Colonic mucosa (tissue), 4 donors: ENCODE measurements at regions of chr9 and their contacts with region 1.

Region 1: DNA sequence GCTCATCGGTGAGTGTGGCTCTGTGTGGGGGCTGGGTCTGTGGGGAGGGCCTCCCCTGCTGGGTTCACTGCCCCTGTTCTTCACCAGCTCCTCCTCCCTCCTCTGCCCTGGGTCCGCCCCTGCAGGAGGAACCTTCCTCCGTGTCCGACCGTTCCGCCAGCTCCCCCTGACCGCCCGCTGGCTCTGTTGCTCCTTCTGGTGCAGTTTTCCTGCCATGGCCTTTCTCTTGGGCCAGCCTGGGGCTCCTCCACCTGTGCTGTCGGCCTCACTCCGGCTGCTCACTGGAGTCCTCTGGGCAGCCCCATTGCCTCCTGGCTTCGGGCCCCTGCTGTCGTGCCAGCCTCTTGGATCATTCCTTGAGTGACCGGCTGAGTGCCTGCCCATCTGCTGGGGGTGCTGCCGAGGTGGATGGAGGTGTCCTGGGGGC is 12.3 kb downstream of the RNU6ATAC start:
- DNase-seq: no peak
- H3K4me3 ChIP-seq: no peak overlapping the region
- H3K27ac ChIP-seq: no peak overlapping the region
- H3K4me1 ChIP-seq: no peaks in the 10 kb centered on the region
- H3K27me3 ChIP-seq: no peaks in the 10 kb centered on the region
- CTCF ChIP-seq: no peak

Region 2: GRCh38 chr9:133803028-133803585 is 348.9 kb before region 1 on chr9:
- intact Hi-C with region 1: loop called (anchors 5 kb)
- DNase-seq: no peak
- H3K4me3 ChIP-seq: no peak overlapping the region
- H3K27ac ChIP-seq: no peak overlapping the region
- H3K4me1 ChIP-seq: no peaks in the 10 kb centered on the region
- H3K27me3 ChIP-seq: no peaks in the 10 kb centered on the region
- CTCF ChIP-seq: no peak

Region 3: DNA sequence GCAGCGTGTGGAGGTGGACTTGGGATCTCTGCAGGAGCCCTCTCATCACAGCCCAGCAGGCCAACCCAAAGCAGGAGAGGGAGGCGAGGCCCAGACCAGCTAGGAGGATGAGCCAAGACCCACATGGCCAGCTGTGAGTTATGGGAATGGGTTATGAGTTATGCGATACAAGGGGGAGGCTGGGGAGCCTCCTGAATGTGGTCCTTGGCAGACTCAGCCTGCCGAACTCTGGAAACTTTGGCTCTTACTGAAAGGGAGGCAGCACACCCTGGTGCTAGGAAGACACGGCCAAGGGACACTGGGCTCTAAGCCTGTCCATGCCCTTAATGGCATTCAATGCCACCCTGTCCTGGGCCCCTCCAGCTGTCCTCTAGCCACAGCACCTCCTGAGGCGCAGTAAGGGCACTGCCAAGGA is 152.2 kb before region 1 on chr9:
- intact Hi-C with region 1: no loop called
- DNase-seq: no peak
- H3K4me3 ChIP-seq: no peak overlapping the region
- H3K27ac ChIP-seq: no peak overlapping the region
- H3K4me1 ChIP-seq: no peaks in the 10 kb centered on the region
- H3K27me3 ChIP-seq: no peaks in the 10 kb centered on the region
- CTCF ChIP-seq: no peak

Region 4: DNA sequence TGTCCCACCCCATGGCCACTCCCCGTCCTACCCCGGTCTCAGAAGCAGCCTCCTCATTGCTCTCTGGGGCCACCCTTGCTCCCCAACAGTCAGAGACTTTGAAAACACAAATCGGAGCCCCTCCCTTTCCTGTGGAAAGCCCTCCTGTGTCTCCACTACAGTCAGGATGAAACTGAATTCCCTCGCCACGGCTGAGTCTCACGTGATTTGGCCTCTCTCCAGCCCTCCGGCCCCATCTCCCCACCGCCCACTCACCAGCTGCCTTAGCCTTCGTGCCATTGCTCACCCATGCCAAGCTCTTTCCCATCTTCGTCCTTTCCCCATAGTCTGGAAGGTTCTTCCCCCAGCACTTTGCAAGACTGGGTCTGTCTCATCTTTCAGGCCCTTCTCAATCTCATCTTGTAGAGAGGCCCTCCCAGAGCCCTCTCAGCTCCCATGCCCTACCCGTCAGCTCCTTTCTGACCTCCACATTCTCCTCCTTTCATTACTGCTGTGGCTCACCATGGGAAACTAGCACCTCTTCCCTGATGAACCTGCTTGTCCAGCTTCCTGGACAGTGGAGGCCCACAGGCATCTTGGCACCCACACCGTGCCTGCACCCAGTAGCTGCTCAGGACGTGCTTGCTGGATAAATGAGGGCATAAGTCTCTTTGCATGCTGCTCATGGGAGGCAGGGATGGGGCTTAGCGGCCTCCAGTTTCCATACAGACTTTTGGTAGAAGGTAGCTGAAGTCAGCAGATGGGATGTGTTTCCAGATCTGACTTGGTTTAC is 363.2 kb after region 1 on chr9:
- intact Hi-C with region 1: no loop called
- DNase-seq: no peak
- H3K4me3 ChIP-seq: no peak overlapping the region
- H3K27ac ChIP-seq: no peak overlapping the region
- H3K4me1 ChIP-seq: no peaks in the 10 kb centered on the region
- H3K27me3 ChIP-seq: no peaks in the 10 kb centered on the region
- CTCF ChIP-seq: no peak